ENCODE measurements at regions of chr9 and their contacts with region 1.

Region 1: GRCh38 chr9:19048966-19049916 is at the start of gene RRAGA:
- DNase-seq: peak; percentile 96
- H3K4me3 Mint-ChIP-seq: peak within 1 kb of the TSS; percentile 82
- H3K27ac Mint-ChIP-seq: peak within 1 kb of the TSS; percentile 96
- H3K4me1 Mint-ChIP-seq: peaks cover 6% of the 10 kb centered on the region
- H3K27me3 Mint-ChIP-seq: no peaks in the 10 kb centered on the region
- CTCF ChIP-seq: peak; percentile 83
- total RNA-seq, gene RRAGA: 44.0 and 50.3 TPM in 2 replicates

Region 2: DNA sequence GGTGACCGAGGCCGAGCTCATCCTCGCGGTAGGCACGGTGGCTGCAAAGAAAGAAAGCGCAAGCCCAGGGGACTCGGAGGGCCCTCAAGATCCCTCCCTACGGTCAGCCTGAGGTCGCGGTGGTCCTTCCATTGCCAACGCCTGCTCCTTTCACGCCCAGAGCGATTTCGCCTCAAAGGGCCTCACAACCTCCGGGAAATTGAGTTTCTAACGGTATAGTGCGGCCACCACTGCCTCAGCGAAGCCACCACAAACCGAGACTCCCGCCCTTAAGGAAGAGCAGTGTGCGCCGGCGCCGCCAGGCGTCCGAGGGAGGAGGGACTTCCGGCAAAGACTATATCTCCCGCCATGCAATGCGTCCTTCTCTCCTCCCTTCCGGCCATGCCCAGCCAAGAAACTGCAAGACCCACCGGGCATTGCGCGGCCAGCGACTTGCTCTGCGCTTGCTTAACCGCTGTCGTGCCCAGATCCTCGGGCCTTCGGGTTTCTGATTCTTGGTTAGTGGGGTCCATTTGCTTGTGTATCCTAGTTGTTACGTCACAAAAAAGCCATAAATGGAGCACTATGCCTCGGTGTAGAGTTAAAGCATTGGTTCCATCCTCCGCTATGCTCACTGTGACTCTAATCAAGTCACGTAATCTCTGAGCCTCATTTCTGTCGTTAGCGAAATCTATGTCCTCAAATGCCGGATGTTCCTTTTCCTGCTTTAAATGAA is 53.5 kb after region 1 on chr9 and contains the start of gene HAUS6:
- CTCF ChIA-PET with region 1: interaction called, 3 read pairs
- POLR2A ChIA-PET with region 1: interaction called, 10 read pairs
- intact Hi-C with region 1: no loop called
- DNase-seq: peak; percentile 97
- H3K4me3 Mint-ChIP-seq: peak within 1 kb of the TSS; percentile 88
- H3K27ac Mint-ChIP-seq: peak within 1 kb of the TSS; percentile 87
- H3K4me1 Mint-ChIP-seq: peaks cover 10% of the 10 kb centered on the region
- H3K27me3 Mint-ChIP-seq: no peaks in the 10 kb centered on the region
- CTCF ChIP-seq: no peak
- total RNA-seq, gene HAUS6: 15.8 and 16.2 TPM in 2 replicates

Region 3: DNA sequence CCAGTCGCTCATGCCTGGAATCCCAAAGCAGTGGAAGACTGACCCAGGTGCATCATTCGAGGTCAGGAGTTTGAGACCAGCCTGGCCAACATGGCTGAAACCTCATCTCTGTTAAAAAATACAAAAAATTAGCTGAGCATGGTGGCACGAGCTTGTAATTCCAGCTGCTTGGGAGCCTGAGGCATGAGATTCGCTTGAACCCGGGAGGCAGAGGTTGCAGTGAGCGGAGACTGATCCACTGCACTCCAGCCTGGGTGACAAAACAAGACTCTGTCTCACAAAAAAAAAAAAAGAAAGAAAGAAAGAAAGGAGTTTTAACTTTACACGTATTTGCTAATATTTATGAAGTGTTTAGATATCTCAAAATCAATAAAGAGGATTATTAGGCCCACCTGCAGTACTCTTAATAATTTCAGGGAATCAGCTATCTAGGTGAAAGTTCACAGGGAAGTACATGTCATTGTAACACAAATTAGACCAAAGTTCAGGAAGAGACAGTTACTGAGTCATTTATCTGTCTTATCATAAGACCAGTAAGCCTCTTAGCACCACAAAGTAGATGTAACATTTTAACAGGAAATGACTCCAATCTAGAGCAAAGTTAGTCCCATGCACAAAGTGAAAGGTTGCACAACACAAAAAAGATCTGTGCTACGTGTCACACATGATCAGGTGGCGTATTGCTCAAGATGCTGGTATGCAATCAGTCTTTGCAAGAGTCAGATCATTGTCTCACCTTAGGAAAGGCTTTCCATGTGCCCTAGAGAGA is 112.2 kb after region 1 on chr9:
- CTCF ChIA-PET with region 1: interaction called, 3 read pairs
- POLR2A ChIA-PET with region 1: interaction called, 28 read pairs
- intact Hi-C with region 1: no loop called
- DNase-seq: peak; percentile 96
- H3K4me3 Mint-ChIP-seq: peak overlapping the region; percentile 11
- H3K27ac Mint-ChIP-seq: peak overlapping the region; percentile 94
- H3K4me1 Mint-ChIP-seq: peaks cover 17% of the 10 kb centered on the region
- H3K27me3 Mint-ChIP-seq: no peaks in the 10 kb centered on the region
- CTCF ChIP-seq: no peak

Region 4: DNA sequence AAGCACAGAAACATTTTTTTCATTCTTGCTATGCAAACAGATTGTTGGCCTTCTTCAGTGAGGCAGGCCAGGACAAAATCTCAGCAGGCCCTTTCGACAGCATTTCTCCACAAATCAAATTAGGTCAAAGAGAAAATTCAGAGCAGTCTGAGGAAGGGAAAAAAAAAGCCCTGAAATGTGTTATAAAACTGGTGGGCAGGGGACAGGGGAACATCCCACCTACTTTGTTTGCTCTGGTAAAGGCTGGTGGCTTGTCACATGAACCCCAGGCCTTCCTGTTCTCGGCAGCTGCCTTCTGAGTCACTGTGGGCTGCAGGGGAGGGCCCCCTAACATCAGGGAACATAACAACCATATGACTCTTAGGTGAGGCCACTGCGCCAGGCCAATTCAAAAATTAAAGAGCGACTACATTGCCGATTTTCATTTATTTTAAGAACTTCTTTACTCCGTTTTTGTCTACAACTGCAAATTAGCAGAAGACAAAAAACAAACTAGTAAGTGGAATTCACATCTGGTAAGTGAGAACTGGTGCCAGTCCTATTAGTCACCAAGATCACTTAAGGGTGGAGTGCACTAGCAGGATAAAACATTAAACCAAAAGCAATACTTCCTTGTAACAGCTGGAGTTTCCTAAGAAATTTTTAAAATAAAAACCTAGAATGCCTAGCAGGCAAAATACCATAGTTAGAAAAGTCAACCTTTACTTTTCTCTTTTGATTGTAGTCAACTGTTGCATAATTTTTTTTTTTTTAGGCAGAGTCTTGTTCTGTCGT is 135.1 kb after region 1 on chr9:
- CTCF ChIA-PET with region 1: interaction called, 8 read pairs
- POLR2A ChIA-PET with region 1: interaction called, 25 read pairs
- intact Hi-C with region 1: no loop called
- DNase-seq: peak; percentile 74
- H3K4me3 Mint-ChIP-seq: peak overlapping the region; percentile 38
- H3K27ac Mint-ChIP-seq: peak overlapping the region; percentile 98
- H3K4me1 Mint-ChIP-seq: peaks cover 13% of the 10 kb centered on the region
- H3K27me3 Mint-ChIP-seq: no peaks in the 10 kb centered on the region
- CTCF ChIP-seq: no peak

Region 5: GRCh38 chr9:19379697-19380046 is 330.4 kb after region 1 on chr9:
- CTCF ChIA-PET with region 1: interaction called, 3 read pairs
- POLR2A ChIA-PET with region 1: interaction called, 29 read pairs
- intact Hi-C with region 1: loop called (anchors 10 kb)
- DNase-seq: no peak
- H3K4me3 Mint-ChIP-seq: peak overlapping the region; percentile 97
- H3K27ac Mint-ChIP-seq: peak overlapping the region; percentile 100
- H3K4me1 Mint-ChIP-seq: peaks cover 22% of the 10 kb centered on the region
- H3K27me3 Mint-ChIP-seq: no peaks in the 10 kb centered on the region
- CTCF ChIP-seq: no peak